RWPE1 (cell line): ENCODE measurements at regions of chr10 and their contacts with region 1.

Region 1: DNA sequence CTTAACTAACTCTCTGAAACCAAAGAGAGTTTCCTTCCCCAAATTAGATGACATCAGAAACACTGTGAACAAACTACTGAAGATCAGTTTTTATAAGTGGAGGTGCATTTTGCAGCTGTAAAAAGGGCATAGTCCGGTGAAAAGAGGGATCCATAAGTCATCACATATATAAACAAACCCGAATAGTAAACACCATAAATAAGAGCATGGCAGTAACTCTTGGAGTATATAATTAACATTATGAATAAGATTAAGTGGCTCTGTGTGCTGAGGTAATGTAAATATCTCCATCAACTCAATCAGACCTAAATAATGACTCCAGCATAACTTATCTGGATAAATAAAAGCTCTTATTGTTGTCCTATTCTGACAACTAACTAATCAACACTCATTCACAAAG is 43.0 kb upstream of the SHTN1 start:
- DNase-seq: no peak
- H3K27ac ChIP-seq: no peak overlapping the region
- CTCF ChIP-seq: no peak

Region 2: DNA sequence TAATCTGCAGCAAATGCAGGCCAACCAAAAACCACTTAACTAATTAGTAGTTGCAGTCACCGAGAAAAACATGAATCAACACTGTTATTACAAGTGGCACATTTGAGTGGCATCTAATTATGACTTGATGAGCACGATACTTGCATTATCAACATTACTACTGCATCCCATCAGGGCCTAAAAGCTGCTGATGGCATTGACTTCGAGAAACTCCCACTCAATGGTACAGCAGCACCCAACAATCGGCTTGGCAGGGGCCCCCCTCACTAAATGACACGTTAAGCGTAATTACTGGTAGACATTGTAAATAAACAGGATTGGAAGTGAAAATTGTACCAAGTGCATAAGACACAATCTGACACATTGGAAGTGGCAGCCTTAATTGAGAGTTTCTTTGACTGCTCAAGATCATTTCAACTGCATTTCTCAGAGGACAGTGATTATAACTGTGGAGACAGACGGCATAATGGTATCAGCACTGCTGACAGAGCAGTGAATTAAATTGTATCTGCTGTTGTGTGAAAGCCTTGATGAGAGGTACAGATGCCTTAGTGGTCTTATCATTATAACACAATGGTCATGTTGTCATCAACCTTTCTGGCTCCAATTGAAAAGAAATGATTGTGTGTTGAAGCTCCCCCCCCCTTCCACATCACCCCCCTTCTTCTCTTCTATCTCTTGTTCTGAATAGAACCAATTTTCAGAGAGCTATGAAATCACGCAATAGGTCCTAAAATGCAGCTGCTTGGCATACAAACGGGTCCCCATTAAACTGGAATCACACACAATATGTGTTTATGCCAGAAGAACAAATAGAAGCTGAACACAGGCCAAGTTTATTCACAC is 86.3 kb before region 1 on chr10:
- CTCF ChIA-PET with region 1: interaction called, 10 read pairs
- POLR2A ChIA-PET with region 1: no interaction called
- DNase-seq: no peak
- H3K27ac ChIP-seq: no peak overlapping the region
- CTCF ChIP-seq: no peak

Region 3: DNA sequence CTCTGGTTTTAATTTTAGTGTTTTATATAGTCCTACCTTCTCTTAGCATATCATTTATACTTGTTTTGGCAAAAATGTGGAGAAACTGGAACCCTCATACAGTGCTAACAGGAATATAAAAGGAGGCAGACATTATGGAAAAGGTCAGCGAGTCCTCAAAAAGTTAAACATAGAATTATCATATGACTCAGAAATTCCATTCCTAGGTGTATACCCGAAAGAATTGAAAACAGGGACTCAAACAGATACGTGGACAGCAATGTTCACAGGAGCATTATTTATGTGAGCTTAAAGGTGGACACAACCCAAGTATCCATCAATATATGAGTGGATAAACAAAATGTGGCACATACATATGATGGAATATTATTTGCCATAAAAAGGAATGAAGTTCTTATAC is 38.6 kb after region 1 on chr10:
- CTCF ChIA-PET with region 1: no interaction called
- POLR2A ChIA-PET with region 1: no interaction called
- DNase-seq: peak; percentile 42
- H3K27ac ChIP-seq: no peak overlapping the region
- CTCF ChIP-seq: no peak